ENCODE measurements at regions of chr3 and their contacts with region 1.

Region 1: GRCh38 chr3:157088601-157089454 is 71.1 kb downstream of the CCNL1 start:
- DNase-seq: peak; percentile 94 to 99 (median 98)
- ATAC-seq: peak; percentile 92
- H3K4me3 ChIP-seq: peak overlapping the region; percentile 48
- H3K27ac ChIP-seq: peak overlapping the region; percentile 90
- H3K4me1 ChIP-seq: peaks cover 24 to 54% of the 10 kb centered on the region in 2 experiments
- H3K27me3 ChIP-seq: no peaks in the 10 kb centered on the region
- CTCF ChIP-seq: 0 out of 6 replicates have a peak, but pooled peaks of 1 of the 3 experiments have one; percentile 4
- EP300 ChIP-seq: peak; percentile 61
- POLR2A ChIP-seq: peak; percentile 78
- RAD21 ChIP-seq: peak in 1 of 2 experiments; percentile 4; a peak in 2 of 4 replicates

Region 2: GRCh38 chr3:157104928-157105652 is 16.3 kb after region 1 on chr3:
- CTCF ChIA-PET with region 1: no interaction called
- POLR2A ChIA-PET with region 1: interaction called, 96 read pairs
- in situ Hi-C with region 1: no loop called
- intact Hi-C with region 1: no loop called
- DNase-seq: peak in 3 of 4 experiments; percentile 34 to 46 (median 40)
- ATAC-seq: peak; percentile 17
- H3K4me3 ChIP-seq: no peak overlapping the region
- H3K27ac ChIP-seq: no peak overlapping the region
- H3K4me1 ChIP-seq: peaks cover 24 to 67% of the 10 kb centered on the region in 2 experiments; a peak in 4 of 5 replicates
- H3K27me3 ChIP-seq: no peaks in the 10 kb centered on the region
- CTCF ChIP-seq: no peak
- EP300 ChIP-seq: no peak
- POLR2A ChIP-seq: no peak
- RAD21 ChIP-seq: no peak

Region 3: GRCh38 chr3:157113832-157114505 is 25.1 kb after region 1 on chr3:
- CTCF ChIA-PET with region 1: no interaction called
- POLR2A ChIA-PET with region 1: interaction called, 96 read pairs
- in situ Hi-C with region 1: no loop called
- intact Hi-C with region 1: loop called (anchors 2 kb)
- DNase-seq: peak in 3 of 4 experiments; percentile 32 to 66 (median 49)
- ATAC-seq: peak; percentile 58
- H3K4me3 ChIP-seq: no peak overlapping the region
- H3K27ac ChIP-seq: peak overlapping the region; percentile 27; the same call in 2 of the 3 replicates
- H3K4me1 ChIP-seq: peaks cover 41 to 87% of the 10 kb centered on the region in 2 experiments; a peak in 4 of 5 replicates
- H3K27me3 ChIP-seq: no peaks in the 10 kb centered on the region
- CTCF ChIP-seq: peak; percentile 47 to 55 (median 50); a peak in 5 of 6 replicates
- EP300 ChIP-seq: no peak
- POLR2A ChIP-seq: no peak
- RAD21 ChIP-seq: peak; percentile 40 to 56